ENCODE measurements at regions of chr5 and their contacts with region 1.

Region 1: DNA sequence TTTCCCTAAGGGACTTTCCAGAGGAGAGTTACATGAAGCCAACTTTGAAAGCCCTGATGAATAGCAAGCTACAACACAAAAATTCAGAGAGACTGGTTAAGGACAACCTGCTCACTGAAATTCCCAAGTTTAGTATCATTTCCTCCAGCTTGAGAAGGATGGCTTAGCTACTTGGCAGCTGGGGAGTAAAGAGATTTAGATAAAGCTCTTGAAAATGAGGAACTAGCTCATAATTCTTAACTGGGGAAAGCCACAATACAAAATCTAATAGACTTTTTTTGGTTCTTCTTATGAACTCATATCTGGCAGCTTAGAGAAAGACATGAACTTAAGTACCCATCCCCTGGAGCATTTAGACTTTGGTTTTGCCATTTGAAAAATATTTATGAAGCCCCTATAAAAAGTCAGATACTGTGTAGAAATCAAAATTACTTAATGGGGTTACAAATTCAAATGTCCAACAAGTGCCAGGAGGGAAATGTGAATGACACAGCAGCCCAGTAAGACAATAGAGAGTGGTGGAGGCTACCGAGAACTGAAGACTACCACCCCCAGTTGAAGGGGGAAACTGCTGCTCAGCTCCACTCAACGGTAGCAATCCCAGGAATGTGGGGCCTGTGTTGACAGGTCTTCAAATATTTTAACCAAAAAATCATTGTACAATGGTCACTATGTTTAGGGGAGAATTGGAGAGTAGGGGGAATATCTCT is 79.4 kb upstream of the ADRB2 start:
- H3K4me3 Mint-ChIP-seq: peak overlapping the region; percentile 33
- H3K27ac Mint-ChIP-seq: peak overlapping the region; percentile 60
- H3K4me1 Mint-ChIP-seq: peaks cover 67% of the 10 kb centered on the region
- H3K27me3 Mint-ChIP-seq: no peaks in the 10 kb centered on the region

Region 2: DNA sequence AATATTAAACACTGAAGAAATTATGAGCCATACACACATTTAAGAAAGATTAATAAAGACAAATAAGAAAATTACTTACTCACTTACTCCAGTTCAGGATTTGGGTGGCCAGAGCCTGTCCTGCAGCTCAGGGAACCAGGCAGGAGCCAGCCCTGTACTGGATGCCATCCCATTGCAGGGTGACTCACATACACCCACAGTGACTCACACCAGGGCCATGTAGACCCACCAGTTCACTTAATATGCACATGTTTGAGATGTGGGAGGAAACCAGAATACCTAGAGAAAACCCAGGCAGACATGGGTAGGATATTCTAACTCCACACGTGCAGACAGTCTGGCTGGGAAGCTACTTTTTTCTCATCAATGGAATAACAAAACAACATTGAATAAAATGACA is 29.8 kb after region 1 on chr5:
- intact Hi-C with region 1: loop called (anchors 1 kb)
- H3K4me3 Mint-ChIP-seq: no peak overlapping the region
- H3K27ac Mint-ChIP-seq: no peak overlapping the region
- H3K4me1 Mint-ChIP-seq: peaks cover 43% of the 10 kb centered on the region
- H3K27me3 Mint-ChIP-seq: no peaks in the 10 kb centered on the region

Region 3: GRCh38 chr5:148791334-148791667 is 44.3 kb after region 1 on chr5:
- intact Hi-C with region 1: loop called (anchors 5 kb)
- H3K4me3 Mint-ChIP-seq: no peak overlapping the region
- H3K27ac Mint-ChIP-seq: peak overlapping the region; percentile 45
- H3K4me1 Mint-ChIP-seq: peaks cover 62% of the 10 kb centered on the region
- H3K27me3 Mint-ChIP-seq: no peaks in the 10 kb centered on the region

Region 4: DNA sequence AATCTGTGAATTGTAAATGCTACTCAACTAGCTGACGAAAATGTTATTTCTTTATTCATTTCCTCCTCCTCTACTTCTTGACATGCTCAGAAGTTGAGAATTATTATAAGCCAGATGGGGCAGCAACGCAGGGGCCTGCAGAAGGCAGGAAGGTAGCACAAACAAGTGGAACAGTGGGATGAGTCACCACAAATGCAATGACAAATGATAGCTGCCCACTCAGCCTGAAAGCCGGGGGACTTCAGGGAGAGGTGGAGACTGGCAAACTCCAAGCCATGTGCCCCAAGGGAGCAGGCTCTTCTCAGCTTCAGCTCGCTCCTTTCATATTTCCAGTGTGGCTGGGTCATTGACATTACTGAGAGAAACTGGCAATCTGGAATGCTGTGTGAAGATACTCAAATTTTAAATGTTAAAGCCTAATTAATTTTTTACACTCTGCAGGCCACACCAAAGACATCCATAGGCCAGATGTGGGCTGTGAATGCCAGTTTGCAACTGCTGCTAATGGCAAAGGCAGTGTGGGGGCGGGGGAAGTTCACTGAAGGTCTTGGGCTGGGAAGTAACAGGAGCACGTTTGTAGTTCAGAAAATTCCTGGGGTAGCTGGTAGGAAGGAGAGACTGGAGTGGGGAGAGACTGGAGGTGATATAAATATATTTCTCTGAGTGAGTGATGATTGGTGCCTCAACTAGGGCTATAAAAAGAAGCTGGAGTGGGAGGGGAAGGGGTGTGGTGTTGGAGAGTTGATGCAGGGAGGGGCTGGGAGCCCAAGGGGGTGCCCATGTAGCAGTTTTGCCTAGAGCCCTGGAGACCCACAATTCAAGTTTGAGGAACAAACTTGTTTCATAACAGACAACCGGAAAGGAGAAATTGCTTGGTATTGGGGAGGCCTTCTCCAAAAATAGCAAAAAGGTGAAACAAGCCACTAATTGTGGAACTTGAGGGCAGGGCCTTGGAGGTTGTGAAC is 58.6 kb after region 1 on chr5:
- intact Hi-C with region 1: loop called (anchors 5 kb)
- H3K4me3 Mint-ChIP-seq: no peak overlapping the region
- H3K27ac Mint-ChIP-seq: peak overlapping the region; percentile 85
- H3K4me1 Mint-ChIP-seq: peaks cover 85% of the 10 kb centered on the region
- H3K27me3 Mint-ChIP-seq: no peaks in the 10 kb centered on the region